ENCODE measurements at regions of chr3 and their contacts with region 1.

Region 1: DNA sequence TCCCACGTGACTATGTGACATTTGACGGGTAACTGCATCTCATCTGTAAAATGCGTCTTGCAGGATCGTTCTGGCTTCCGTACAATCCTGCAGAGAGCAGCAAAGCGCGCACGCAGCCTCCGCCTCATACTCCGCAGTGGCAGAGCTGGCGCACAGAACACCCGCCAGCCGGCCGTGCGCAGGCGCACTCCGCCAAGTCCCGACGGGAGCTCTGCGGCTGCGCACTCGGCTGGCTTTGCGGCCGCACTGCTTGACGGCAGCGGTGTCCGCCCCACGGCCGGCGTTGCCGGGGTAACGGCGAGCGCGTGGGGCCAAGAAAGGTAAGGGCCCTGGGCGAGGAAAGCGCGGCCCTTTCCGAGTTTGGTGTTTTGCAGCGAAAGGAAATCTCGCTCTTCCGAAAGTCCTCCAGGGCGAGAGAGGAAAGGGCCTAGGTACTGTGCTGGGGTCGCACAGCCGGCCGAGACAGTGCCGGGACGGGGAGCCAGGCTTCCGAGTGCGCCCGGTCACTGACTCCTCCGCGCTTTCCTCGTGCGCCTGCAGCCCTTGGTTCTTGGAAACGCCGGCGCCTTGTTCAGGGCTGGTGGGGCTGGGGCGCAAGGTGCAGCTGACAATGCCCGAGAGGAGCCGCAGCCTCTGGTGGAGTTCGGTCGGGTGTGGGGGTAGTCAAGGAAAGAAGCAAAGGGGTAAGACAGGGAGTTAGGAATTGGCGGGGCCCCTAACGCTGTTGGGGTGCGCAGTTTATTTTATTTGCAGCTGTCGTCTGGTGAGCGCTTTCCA is at the start of gene TSEN2:
- DNase-seq: peak; percentile 95
- H3K4me3 Mint-ChIP-seq: peak within 1 kb of the TSS; percentile 93
- H3K27ac Mint-ChIP-seq: peak within 1 kb of the TSS; percentile 82
- H3K4me1 Mint-ChIP-seq: peaks cover 44% of the 10 kb centered on the region
- H3K27me3 Mint-ChIP-seq: no peaks in the 10 kb centered on the region
- total RNA-seq, gene TSEN2: 14.0 to 14.8 TPM

Region 2: GRCh38 chr3:11719406-11720230 is 764.8 kb before region 1 on chr3:
- CTCF ChIA-PET with region 1: no interaction called
- intact Hi-C with region 1: loop called (anchors 2 kb)
- DNase-seq: peak; percentile 73
- H3K4me3 Mint-ChIP-seq: peak overlapping the region; percentile 88
- H3K27ac Mint-ChIP-seq: no peak overlapping the region
- H3K4me1 Mint-ChIP-seq: peaks cover 17% of the 10 kb centered on the region
- H3K27me3 Mint-ChIP-seq: peaks cover 5% of the 10 kb centered on the region

Region 3: DNA sequence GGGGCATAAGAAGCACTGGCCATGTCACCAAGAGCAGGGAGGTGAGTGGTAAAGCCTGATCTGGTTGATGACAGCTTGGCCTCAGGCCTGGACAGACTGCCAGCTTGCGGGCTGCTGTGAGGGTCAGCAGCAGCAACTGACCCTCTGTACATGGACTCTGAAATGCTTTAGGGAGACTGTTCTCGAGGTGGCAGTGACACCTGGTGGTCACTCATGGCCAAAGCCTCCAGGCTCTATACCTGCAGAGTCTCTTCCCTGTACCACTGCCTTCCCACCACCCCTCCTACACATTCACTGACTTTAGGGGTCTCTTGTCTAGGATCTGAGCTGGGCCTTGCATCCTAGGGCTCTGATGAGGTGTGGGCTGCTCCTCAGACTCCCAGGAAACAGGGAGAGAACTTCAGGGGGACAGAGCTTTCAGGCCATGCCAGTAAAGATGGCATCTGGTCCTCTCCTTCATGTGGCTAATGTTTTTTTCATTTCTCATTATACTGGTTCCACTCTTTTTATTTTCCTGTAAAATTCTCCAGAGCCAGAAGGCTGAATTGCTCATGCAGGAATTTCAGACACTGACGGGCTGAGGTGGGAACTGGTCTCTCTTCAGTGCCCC is 308.4 kb before region 1 on chr3:
- CTCF ChIA-PET with region 1: interaction called, 4 read pairs
- intact Hi-C with region 1: loop called (anchors 5 kb)
- DNase-seq: peak; percentile 62
- H3K4me3 Mint-ChIP-seq: no peak overlapping the region
- H3K27ac Mint-ChIP-seq: no peak overlapping the region
- H3K4me1 Mint-ChIP-seq: peaks cover 14% of the 10 kb centered on the region
- H3K27me3 Mint-ChIP-seq: peaks cover 1% of the 10 kb centered on the region

Region 4: GRCh38 chr3:12471243-12471651 is 13.1 kb before region 1 on chr3:
- CTCF ChIA-PET with region 1: interaction called, 17 read pairs
- intact Hi-C with region 1: no loop called
- DNase-seq: peak; percentile 89
- H3K4me3 Mint-ChIP-seq: no peak overlapping the region
- H3K27ac Mint-ChIP-seq: peak overlapping the region; percentile 71
- H3K4me1 Mint-ChIP-seq: peaks cover 22% of the 10 kb centered on the region
- H3K27me3 Mint-ChIP-seq: no peaks in the 10 kb centered on the region

Region 5: GRCh38 chr3:12663936-12664908 is 179.8 kb after region 1 on chr3 and contains the start of gene RAF1:
- CTCF ChIA-PET with region 1: no interaction called
- intact Hi-C with region 1: loop called (anchors 1 kb)
- DNase-seq: peak; percentile 98
- H3K4me3 Mint-ChIP-seq: peak within 1 kb of the TSS; percentile 82
- H3K27ac Mint-ChIP-seq: peak within 1 kb of the TSS; percentile 98
- H3K4me1 Mint-ChIP-seq: peaks cover 28% of the 10 kb centered on the region
- H3K27me3 Mint-ChIP-seq: no peaks in the 10 kb centered on the region
- total RNA-seq, gene RAF1: 62.5 to 68.5 TPM

Region 6: DNA sequence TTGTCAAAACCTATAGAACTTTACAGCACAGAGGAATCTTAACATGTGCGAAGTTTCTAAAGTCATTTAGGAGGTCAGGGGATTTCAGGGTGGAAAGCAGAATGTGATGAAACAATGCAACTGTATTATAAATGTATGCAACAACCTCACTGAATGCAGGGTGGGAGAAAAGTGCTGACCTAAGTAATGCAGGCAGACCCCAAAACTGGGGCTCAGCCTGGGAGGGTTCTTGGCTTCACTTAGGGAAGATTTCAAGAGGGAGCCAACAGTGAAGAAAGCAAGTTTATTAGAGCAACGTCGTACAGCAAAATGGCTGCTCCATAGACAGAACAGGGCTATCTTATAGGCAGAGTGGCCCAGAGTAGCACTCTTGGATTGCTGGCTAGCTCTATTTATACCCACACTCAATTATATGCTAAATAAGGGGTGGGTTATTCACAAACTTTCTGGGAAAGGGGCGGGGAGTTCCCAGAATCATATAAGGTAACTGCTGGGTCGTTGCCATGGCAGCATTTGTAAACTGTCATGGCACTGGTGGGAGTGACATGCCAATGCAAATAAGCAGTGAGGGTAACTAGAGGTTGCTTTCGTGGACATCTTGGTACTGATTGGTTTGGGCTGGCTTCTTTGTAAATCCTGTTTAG is 297.9 kb after region 1 on chr3:
- CTCF ChIA-PET with region 1: no interaction called
- intact Hi-C with region 1: no loop called
- DNase-seq: no peak
- H3K4me3 Mint-ChIP-seq: no peak overlapping the region
- H3K27ac Mint-ChIP-seq: no peak overlapping the region
- H3K4me1 Mint-ChIP-seq: no peaks in the 10 kb centered on the region
- H3K27me3 Mint-ChIP-seq: peaks cover 14% of the 10 kb centered on the region

Region 7: GRCh38 chr3:12891985-12892839 is 407.8 kb after region 1 on chr3:
- CTCF ChIA-PET with region 1: no interaction called
- intact Hi-C with region 1: loop called (anchors 1 kb)
- DNase-seq: peak; percentile 63
- H3K4me3 Mint-ChIP-seq: no peak overlapping the region
- H3K27ac Mint-ChIP-seq: no peak overlapping the region
- H3K4me1 Mint-ChIP-seq: peaks cover 5% of the 10 kb centered on the region
- H3K27me3 Mint-ChIP-seq: no peaks in the 10 kb centered on the region